ENCODE measurements at regions of chr16 and their contacts with region 1.

Region 1: DNA sequence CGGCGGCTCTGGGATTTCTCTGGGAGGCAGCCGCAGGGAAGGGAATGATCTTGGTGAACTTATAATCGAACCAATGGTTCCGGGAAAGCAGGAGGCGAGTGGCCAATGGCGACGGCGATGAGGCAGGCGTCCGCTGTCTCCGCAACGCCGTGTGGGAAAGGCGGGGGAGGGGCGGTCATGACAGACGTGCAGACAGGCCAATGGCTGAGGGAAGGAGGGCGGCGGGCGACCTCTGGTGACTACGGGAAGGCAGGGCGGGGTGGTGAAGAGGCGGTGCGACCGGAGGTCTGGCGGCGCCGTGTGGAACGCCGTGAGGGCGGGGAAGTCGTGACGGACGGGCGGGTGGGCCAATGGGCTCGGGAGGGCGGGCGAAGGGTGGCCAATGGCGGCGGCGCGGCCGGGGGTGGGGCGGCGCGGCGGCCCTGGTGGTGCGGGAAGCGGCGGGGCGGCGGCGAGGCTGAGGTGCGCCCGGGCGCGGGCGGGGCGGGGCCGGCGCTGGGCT is at the start of gene RAB40C:
- DNase-seq: peak; percentile 98 to 100 (median 99)
- ATAC-seq: peak; percentile 81
- H3K4me3 ChIP-seq: peak within 1 kb of the TSS; percentile 70 to 98
- H3K4me3 Mint-ChIP-seq: peak within 1 kb of the TSS; percentile 95
- H3K27ac ChIP-seq: peak within 1 kb of the TSS; percentile 84 to 93
- H3K27ac Mint-ChIP-seq: peak within 1 kb of the TSS; percentile 98
- H3K4me1 ChIP-seq: peaks cover 29% of the 10 kb centered on the region
- H3K4me1 Mint-ChIP-seq: peaks cover 40% of the 10 kb centered on the region
- H3K27me3 ChIP-seq: no peaks in the 10 kb centered on the region
- H3K27me3 Mint-ChIP-seq: no peaks in the 10 kb centered on the region
- CTCF ChIP-seq: no peak
- total RNA-seq, gene RAB40C: 3.9 to 5.9 TPM

Region 2: DNA sequence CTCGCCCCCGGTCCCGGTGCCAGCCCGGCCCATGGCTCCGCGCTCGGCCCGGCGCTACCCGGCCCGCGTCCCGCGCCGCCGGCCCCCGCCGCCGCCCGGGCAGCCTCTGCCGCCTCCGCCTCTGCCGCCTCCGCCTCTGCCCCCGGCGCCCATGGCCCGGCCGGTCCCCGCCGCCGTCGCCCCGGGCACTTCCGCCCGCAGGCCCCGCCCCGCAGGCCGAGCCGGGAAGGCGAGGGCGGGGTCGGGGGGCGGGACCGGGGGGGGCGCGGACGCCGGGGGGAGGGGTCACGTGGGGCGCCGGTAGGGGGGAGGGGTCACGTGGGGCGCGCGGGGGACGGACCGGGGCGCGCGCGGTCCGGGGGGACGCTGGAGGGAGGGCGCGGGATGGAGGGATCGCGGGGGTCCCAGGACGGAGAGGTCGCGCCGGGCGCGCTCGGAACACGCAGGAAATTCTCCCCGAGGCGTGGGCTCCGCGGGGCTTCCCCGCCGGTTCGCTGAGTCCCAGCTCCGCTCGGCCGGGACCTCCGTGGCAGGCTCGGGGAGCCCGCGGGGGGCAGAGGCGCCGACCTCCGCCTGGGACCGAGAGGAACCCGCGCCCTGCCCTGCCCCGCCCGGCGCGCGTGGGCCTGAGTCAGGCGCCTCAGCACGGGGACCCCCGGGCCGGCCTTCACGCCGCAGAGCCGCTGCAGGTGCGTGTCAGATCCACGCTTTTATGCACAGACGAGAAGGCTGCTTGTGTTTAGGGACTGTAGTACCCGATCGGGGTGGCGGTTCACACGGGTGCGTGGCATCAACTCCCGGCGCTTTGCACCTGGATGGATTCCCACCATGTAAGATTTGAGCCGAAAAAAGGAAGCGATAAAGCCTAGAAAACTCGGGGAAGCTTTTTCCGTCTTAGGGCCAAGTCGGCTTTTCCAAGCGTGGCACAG is 207.7 kb before region 1 on chr16 and contains the start of gene PGAP6:
- CTCF ChIA-PET with region 1: no interaction called
- POLR2A ChIA-PET with region 1: interaction called, 3 read pairs
- intact Hi-C with region 1: loop called in 1 of 2 experiments (anchors 2 kb)
- DNase-seq: peak in 8 of 9 experiments; percentile 50 to 85 (median 70)
- ATAC-seq: peak; percentile 57
- H3K4me3 ChIP-seq: peak within 1 kb of the TSS; percentile 63 to 74
- H3K4me3 Mint-ChIP-seq: peak within 1 kb of the TSS; percentile 93
- H3K27ac ChIP-seq: peak within 1 kb of the TSS in 1 of 2 experiments; percentile 68
- H3K27ac Mint-ChIP-seq: peak within 1 kb of the TSS; percentile 86
- H3K4me1 ChIP-seq: peaks cover 34% of the 10 kb centered on the region
- H3K4me1 Mint-ChIP-seq: peaks cover 29% of the 10 kb centered on the region
- H3K27me3 ChIP-seq: no peaks in the 10 kb centered on the region
- H3K27me3 Mint-ChIP-seq: no peaks in the 10 kb centered on the region
- CTCF ChIP-seq: no peak
- total RNA-seq, gene PGAP6: 57.9 to 60.8 TPM

Region 3: DNA sequence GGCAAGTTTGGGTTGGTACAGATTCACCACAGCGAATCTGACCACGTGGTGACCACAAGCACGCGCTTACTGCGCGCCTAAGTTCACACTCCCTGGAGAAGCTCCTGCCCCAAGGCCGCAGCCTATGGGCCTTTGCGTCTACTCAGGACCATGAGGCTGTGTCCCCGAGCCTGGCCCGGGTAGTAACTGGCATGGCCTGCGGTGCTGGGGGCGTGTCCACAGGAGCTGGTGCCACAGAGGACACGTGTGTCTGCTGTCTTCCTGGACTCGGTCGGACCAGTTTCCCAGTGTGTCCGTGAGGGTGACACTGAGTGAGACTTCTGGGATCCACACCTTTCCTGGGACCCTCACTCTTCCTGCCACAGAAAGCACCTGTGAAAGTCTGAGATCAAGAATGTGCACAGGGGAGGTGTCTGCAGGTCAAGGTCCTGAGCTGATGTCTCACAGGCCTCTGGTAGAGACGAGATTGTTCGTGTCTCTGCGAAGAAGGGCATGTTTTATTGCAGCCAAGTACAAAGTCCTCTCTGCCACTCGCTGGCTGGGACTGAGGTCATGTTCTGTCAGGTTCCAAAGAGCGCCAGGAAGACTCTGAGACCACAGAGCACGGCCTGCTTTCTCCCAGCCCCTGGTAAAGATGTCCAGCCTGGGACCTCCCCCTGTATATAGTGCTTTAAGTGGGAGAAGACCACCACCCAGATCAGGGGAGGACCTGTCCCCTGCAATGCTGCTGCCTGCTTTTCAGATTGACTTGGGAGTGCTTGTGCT is 87.3 kb before region 1 on chr16:
- CTCF ChIA-PET with region 1: no interaction called
- POLR2A ChIA-PET with region 1: no interaction called
- intact Hi-C with region 1: no loop called
- DNase-seq: no peak
- ATAC-seq: no peak
- H3K4me3 ChIP-seq: no peak overlapping the region
- H3K4me3 Mint-ChIP-seq: no peak overlapping the region
- H3K27ac ChIP-seq: no peak overlapping the region
- H3K27ac Mint-ChIP-seq: no peak overlapping the region
- H3K4me1 ChIP-seq: no peaks in the 10 kb centered on the region
- H3K4me1 Mint-ChIP-seq: no peaks in the 10 kb centered on the region
- H3K27me3 ChIP-seq: no peaks in the 10 kb centered on the region
- H3K27me3 Mint-ChIP-seq: no peaks in the 10 kb centered on the region
- CTCF ChIP-seq: no peak

Region 4: DNA sequence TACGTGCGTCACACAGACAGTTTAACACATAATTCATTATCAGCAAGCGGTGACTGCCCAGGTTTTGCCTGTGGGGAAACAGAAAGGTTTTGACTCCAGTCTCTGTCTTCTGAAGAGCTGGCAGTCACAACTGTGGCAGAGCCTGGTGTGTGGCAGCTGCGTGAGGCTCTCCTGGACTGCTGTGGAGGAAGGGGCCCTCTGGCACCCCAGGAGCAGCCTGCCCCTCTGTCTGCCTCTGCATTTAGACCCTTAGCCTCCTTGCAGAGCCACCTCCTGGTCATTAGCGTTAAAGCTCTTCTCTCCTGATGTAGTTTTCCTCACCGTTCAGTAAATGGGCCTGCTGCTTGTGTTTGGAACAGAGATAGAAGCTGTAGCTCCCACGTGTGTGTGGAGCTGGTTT is 11.1 kb after region 1 on chr16:
- CTCF ChIA-PET with region 1: no interaction called
- POLR2A ChIA-PET with region 1: no interaction called
- intact Hi-C with region 1: no loop called
- DNase-seq: no peak
- ATAC-seq: no peak
- H3K4me3 ChIP-seq: no peak overlapping the region
- H3K4me3 Mint-ChIP-seq: no peak overlapping the region
- H3K27ac ChIP-seq: no peak overlapping the region
- H3K27ac Mint-ChIP-seq: no peak overlapping the region
- H3K4me1 ChIP-seq: no peaks in the 10 kb centered on the region
- H3K4me1 Mint-ChIP-seq: peaks cover 19% of the 10 kb centered on the region
- H3K27me3 ChIP-seq: no peaks in the 10 kb centered on the region
- H3K27me3 Mint-ChIP-seq: no peaks in the 10 kb centered on the region
- CTCF ChIP-seq: no peak

Region 5: DNA sequence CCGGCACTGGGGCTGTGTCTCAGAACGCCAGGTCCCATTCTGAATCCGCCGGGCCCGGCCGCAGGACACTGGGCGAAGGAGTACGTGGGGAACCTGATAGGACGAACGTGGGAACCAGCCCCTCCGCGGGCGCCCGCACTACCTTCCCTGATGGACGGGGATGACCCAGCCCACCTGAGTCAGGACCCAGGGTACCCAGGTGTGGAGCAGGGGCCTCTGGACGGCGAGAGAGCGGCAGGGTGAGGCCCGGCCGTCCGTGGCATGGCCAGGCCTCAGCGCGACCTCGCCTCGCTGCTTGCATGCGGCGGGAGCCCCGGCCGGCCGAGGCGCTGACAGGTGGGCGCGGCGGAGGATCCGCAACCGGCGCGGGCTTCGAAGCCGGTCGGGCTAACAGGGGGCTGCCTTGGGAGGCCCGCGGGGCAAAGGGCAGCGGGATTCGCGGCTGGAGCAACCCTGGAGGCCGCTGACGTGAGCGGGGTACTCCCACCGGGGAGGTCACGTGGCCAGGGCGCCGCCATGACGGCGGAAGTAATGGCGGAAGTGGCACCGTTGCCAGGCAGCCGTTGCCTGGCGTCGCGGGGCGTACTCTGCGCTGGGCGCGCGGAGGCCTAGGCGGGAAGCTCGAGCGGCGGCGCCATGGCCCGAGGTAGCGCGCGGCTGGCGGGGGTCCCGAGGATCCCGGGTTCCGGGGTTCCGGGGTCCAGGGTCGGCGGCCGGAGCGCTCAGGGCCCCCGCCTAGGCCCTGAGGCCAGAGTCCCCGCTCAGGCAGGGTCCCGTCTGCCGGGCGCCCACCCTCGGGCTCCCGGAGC is 59.3 kb after region 1 on chr16 and contains the start of gene WDR90:
- CTCF ChIA-PET with region 1: no interaction called
- POLR2A ChIA-PET with region 1: interaction called, 5 read pairs
- intact Hi-C with region 1: loop called in 1 of 2 experiments (anchors 1 kb)
- DNase-seq: peak; percentile 74 to 96 (median 92)
- ATAC-seq: peak; percentile 91
- H3K4me3 ChIP-seq: peak within 1 kb of the TSS; percentile 66 to 88
- H3K4me3 Mint-ChIP-seq: peak within 1 kb of the TSS; percentile 79
- H3K27ac ChIP-seq: peak within 1 kb of the TSS; percentile 72 to 91
- H3K27ac Mint-ChIP-seq: peak within 1 kb of the TSS; percentile 81
- H3K4me1 ChIP-seq: peaks cover 19% of the 10 kb centered on the region
- H3K4me1 Mint-ChIP-seq: peaks cover 20% of the 10 kb centered on the region
- H3K27me3 ChIP-seq: no peaks in the 10 kb centered on the region
- H3K27me3 Mint-ChIP-seq: no peaks in the 10 kb centered on the region
- CTCF ChIP-seq: no peak
- total RNA-seq, gene WDR90: 15.0 to 22.8 TPM

Region 6: GRCh38 chr16:720990-721764 is 131.5 kb after region 1 on chr16 and contains the start of gene ANTKMT:
- CTCF ChIA-PET with region 1: no interaction called
- POLR2A ChIA-PET with region 1: no interaction called
- intact Hi-C with region 1: loop called in 1 of 2 experiments (anchors 2 kb)
- DNase-seq: peak; percentile 51 to 91 (median 77)
- ATAC-seq: peak; percentile 64
- H3K4me3 ChIP-seq: peak within 1 kb of the TSS; percentile 79 to 86
- H3K4me3 Mint-ChIP-seq: peak within 1 kb of the TSS; percentile 86
- H3K27ac ChIP-seq: peak within 1 kb of the TSS; percentile 72 to 80
- H3K27ac Mint-ChIP-seq: peak within 1 kb of the TSS; percentile 86
- H3K4me1 ChIP-seq: peaks cover 45% of the 10 kb centered on the region
- H3K4me1 Mint-ChIP-seq: peaks cover 44% of the 10 kb centered on the region
- H3K27me3 ChIP-seq: peaks cover 0 to under 1% of the 10 kb centered on the region in 2 experiments
- H3K27me3 Mint-ChIP-seq: no peaks in the 10 kb centered on the region
- CTCF ChIP-seq: no peak
- total RNA-seq, gene ANTKMT: 24.7 to 29.6 TPM

Region 7: GRCh38 chr16:807347-808084 is 217.8 kb after region 1 on chr16:
- CTCF ChIA-PET with region 1: no interaction called
- POLR2A ChIA-PET with region 1: no interaction called
- intact Hi-C with region 1: loop called in 1 of 2 experiments (anchors 5 kb)
- DNase-seq: peak; percentile 65 to 93 (median 81)
- ATAC-seq: peak; percentile 88
- H3K4me3 ChIP-seq: peak overlapping the region; percentile 53 to 88
- H3K4me3 Mint-ChIP-seq: peak overlapping the region; percentile 94
- H3K27ac ChIP-seq: peak overlapping the region; percentile 61 to 85
- H3K27ac Mint-ChIP-seq: peak overlapping the region; percentile 92
- H3K4me1 ChIP-seq: peaks cover 7% of the 10 kb centered on the region
- H3K4me1 Mint-ChIP-seq: peaks cover 15% of the 10 kb centered on the region
- H3K27me3 ChIP-seq: peaks cover 0 to under 1% of the 10 kb centered on the region in 2 experiments
- H3K27me3 Mint-ChIP-seq: peaks cover 5% of the 10 kb centered on the region
- CTCF ChIP-seq: no peak

Measured in CD8-positive, alpha-beta T cell (primary cell).